ENCODE measurements at regions of chr17 and their contacts with region 1.

Region 1: DNA sequence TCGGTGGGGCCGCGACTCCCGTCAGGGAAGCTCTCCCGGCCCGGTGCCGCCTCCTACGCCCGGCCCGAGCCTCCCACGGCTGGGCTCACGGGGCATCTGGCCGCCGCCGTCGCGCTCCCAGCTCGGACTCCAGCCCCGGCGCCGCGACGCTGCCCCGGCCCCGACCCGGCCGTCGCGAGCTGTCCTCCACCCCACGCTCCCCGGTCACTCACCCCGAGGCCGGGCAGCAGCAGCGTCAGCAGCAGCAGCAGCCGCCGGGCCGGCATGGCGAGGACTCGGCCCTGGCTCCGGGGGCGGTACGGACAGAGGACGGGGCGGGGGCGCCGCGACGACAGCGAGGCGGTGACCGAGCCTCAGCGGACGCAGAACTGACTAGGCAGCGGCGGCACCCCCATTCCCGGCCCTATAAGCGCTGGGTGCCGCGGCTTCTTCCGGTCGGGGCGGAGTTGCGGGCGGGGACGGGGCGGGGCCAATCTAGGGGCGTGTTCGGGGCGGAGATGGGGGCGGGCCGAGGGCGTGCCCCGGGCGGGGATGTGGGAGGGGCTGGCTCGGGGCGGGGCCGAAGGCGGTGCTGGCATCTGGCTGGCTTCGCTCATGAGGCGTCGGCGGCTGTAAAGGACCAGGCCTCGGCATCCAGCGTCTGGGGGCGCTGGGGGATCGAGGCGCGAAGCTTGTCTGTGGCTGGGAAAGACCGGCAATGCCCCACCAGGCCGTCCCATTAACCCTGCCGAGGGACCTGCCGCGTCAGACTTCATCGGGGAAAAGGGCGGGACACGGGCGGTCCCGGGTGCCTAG is at the start of gene ERN1:
- DNase-seq: peak; percentile 92
- H3K4me3 Mint-ChIP-seq: peak within 1 kb of the TSS; percentile 84
- H3K27ac Mint-ChIP-seq: peak within 1 kb of the TSS; percentile 91
- H3K4me1 Mint-ChIP-seq: peaks cover 53% of the 10 kb centered on the region
- H3K27me3 Mint-ChIP-seq: no peaks in the 10 kb centered on the region
- total RNA-seq, gene ERN1: 126 to 128 TPM

Region 2: GRCh38 chr17:63881876-63882601 is 247.9 kb before region 1 on chr17 and contains the start of gene GH2:
- CTCF ChIA-PET with region 1: interaction called, 14 read pairs
- POLR2A ChIA-PET with region 1: no interaction called
- DNase-seq: peak; percentile 65
- H3K4me3 Mint-ChIP-seq: no peak within 1 kb of the TSS
- H3K27ac Mint-ChIP-seq: no peak within 1 kb of the TSS
- H3K4me1 Mint-ChIP-seq: no peaks in the 10 kb centered on the region
- H3K27me3 Mint-ChIP-seq: peaks cover 4% of the 10 kb centered on the region
- total RNA-seq, gene GH2: not detected

Region 3: DNA sequence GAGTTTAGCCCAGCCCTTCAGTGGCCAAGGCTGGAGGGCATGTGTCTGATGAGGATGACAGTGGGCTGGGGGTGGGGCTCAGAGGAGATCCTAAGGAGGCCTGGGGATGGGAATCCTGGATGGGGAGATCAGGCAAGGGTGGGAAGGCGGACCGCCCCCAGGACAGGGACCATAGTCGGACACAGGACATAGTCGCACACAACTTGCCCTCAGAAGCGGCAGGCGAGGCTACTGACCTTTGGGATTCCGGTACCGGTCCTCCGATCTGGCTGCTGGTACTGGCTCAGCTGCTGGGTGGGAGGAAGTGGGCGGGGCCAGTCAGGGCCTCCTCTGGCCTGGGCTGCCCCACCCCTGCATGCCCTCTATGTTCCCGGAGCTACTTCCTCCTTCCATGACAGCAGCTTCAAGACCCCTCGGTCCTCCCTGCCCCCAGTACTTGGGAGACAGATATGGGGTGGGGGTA is 198.8 kb before region 1 on chr17:
- CTCF ChIA-PET with region 1: interaction called, 24 read pairs
- POLR2A ChIA-PET with region 1: interaction called, 3 read pairs
- DNase-seq: peak; percentile 79
- H3K4me3 Mint-ChIP-seq: peak overlapping the region; percentile 96
- H3K27ac Mint-ChIP-seq: peak overlapping the region; percentile 90
- H3K4me1 Mint-ChIP-seq: peaks cover 31% of the 10 kb centered on the region
- H3K27me3 Mint-ChIP-seq: peaks cover 4% of the 10 kb centered on the region

Region 4: DNA sequence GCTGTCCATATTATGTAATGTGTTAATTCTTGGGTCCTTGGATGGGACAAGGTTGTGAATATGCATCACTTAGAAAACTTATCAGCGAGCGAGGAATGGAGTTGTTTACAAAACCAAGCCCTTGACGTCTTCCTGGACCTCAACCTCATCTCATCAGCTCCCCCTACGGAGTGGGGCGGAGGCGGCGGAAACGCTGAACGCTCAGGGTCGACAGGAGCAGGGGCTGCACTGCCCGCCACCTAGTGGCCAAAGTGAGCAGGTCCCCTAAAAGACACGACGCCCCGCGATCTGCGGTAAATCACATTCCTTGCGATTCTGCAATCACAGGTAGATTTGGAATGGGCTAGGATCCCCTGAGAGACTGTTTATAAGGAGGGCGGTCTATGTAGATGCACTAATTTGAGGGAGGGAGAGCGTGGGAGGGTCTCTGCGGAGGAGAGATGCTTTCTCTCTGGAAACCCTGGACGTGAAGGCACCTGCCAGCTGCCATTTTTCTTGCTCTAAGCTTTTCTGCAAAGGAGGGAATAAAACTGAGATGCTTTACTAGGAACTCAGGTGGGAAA is 104.1 kb before region 1 on chr17:
- CTCF ChIA-PET with region 1: interaction called, 510 read pairs
- POLR2A ChIA-PET with region 1: interaction called, 43 read pairs
- DNase-seq: peak; percentile 95
- H3K4me3 Mint-ChIP-seq: peak overlapping the region; percentile 73
- H3K27ac Mint-ChIP-seq: peak overlapping the region; percentile 99
- H3K4me1 Mint-ChIP-seq: peaks cover 75% of the 10 kb centered on the region
- H3K27me3 Mint-ChIP-seq: no peaks in the 10 kb centered on the region

Region 5: DNA sequence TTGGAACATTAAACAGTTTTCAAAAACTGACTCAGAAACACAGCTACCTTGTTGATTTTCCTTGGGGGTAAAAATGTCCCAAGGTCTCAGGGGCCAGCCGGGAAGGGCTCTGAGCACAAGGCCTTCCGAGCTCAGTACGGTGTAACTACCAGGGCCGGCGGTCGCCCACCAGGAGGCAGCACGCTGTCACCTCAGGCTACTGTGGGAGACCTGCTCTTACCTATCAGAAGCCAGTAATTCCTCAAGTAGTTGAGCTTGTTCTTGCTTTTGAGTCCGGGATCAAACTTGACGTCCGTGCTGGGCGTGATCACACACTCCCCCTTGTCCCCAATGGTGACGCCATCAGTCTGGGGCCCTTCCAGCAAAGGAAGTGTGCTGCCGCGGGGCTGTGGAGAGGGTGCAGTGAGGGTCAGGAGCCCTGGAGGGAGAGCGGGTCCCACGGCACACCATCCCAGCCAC is 66.2 kb before region 1 on chr17:
- CTCF ChIA-PET with region 1: interaction called, 92 read pairs
- POLR2A ChIA-PET with region 1: interaction called, 67 read pairs
- DNase-seq: peak; percentile 66
- H3K4me3 Mint-ChIP-seq: peak overlapping the region; percentile 89
- H3K27ac Mint-ChIP-seq: peak overlapping the region; percentile 96
- H3K4me1 Mint-ChIP-seq: peaks cover 99% of the 10 kb centered on the region
- H3K27me3 Mint-ChIP-seq: no peaks in the 10 kb centered on the region

Region 6: DNA sequence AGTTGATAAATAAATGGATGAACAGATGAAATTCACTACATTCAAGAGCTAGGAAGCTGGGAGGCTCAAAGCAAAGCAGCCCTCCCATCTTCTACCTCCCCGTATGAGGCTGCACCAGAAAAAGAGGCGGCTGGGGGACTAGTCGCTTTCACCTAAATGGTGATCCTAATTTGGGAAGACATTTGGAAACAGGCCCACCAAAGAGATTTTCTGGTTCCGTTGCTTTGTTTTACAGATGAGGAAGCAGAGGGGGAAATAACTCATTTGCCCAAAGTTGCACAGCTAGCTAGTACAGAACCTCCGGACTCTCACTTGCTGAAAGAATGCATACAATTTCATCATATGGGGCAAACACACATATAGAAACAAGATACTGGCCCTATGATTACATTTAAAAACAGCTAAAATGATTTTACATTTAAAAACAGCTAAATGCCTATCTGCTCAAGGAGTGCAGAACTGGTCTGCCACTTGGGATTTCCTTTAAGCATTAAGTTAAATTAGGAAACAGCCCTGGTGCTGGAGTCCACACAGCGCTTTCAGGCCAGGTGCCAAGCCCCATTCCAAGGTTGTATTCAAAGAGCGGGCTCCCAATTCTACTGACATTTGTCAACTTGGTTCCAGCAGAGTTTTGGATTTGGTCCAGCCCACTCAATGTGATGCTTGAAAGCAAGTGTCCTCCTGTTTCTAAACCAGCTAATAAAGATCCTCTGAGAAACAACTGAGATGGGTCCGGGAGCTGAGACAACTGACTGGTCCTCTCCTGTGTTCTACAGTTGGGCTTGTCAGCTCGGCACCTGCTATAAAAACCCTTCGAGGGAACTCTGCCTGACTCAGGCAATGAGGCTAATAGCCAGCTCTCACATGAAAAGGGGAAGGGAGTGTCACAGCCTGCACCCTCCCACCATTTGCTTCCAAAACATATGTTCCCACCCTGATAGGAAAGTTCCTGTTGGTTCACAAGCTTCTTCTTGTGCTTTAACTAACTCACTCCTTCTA is 11.7 kb before region 1 on chr17:
- CTCF ChIA-PET with region 1: interaction called, 10 read pairs
- POLR2A ChIA-PET with region 1: interaction called, 52 read pairs
- DNase-seq: no peak
- H3K4me3 Mint-ChIP-seq: no peak overlapping the region
- H3K27ac Mint-ChIP-seq: no peak overlapping the region
- H3K4me1 Mint-ChIP-seq: peaks cover 80% of the 10 kb centered on the region
- H3K27me3 Mint-ChIP-seq: no peaks in the 10 kb centered on the region

Measured in activated CD4-positive, alpha-beta memory T cell treated with anti-CD3 and anti-CD28 coated beads, Interleukin-2, amount 10 ng/mL, durations not matched to agents 7 days and 5 days (primary cell).